GM12878 (cell line): ENCODE measurements at regions of chr3 and their contacts with region 1.

Region 1: GRCh38 chr3:133040696-133041523 is 2.7 kb downstream of the TMEM108 start:
- DNase-seq: peak; percentile 21
- ATAC-seq: peak; percentile 96
- H3K4me3 ChIP-seq: no peak overlapping the region
- H3K27ac ChIP-seq: no peak overlapping the region
- H3K4me1 ChIP-seq: no peaks in the 10 kb centered on the region
- H3K27me3 ChIP-seq: peaks cover 7 to 14% of the 10 kb centered on the region in 2 experiments
- CTCF ChIP-seq: peak; percentile 68 to 73 (median 70)
- EP300 ChIP-seq: no peak
- POLR2A ChIP-seq: no peak
- RAD21 ChIP-seq: peak; percentile 91

Region 2: GRCh38 chr3:133211449-133211848 is 170.5 kb after region 1 on chr3:
- CTCF ChIA-PET with region 1: interaction called, 9 read pairs
- POLR2A ChIA-PET with region 1: no interaction called
- RAD21 ChIA-PET with region 1: no interaction called
- SMC1A ChIA-PET with region 1: interaction called, 12 read pairs
- in situ Hi-C with region 1: no loop called
- intact Hi-C with region 1: no loop called
- DNase-seq: peak; percentile 78
- ATAC-seq: peak; percentile 99
- H3K4me3 ChIP-seq: no peak overlapping the region
- H3K27ac ChIP-seq: no peak overlapping the region; the same call in 1 of the 2 replicates
- H3K4me1 ChIP-seq: peaks cover 29% of the 10 kb centered on the region
- H3K27me3 ChIP-seq: no peaks in the 10 kb centered on the region
- CTCF ChIP-seq: no peak
- EP300 ChIP-seq: peak; percentile 17 to 61; a peak in 1 of 4 replicates
- POLR2A ChIP-seq: no peak
- RAD21 ChIP-seq: no peak

Region 3: DNA sequence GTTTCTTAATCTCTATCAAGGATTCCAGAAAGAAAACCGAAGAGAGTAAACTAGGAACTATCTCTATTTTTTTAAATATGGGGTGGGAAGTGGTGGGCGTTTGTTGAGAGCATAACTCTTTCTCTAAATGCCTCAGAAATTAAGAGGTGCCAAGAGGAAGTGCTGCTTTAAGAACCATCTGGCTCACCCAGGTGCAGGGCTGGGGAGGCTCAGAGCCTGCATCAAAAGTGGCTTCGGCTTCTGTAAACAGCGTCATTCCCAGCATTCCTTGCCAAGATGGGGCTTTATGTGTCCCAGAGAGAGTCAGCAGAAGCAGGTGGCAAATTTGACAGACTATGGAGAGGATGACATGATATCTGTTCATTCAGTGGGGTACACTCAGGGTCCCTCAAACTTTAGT is 235.7 kb after region 1 on chr3:
- CTCF ChIA-PET with region 1: interaction called, 3 read pairs
- POLR2A ChIA-PET with region 1: no interaction called
- RAD21 ChIA-PET with region 1: no interaction called
- SMC1A ChIA-PET with region 1: no interaction called
- in situ Hi-C with region 1: no loop called
- intact Hi-C with region 1: loop called (anchors 5 kb)
- DNase-seq: no peak
- ATAC-seq: peak; percentile 53
- H3K4me3 ChIP-seq: no peak overlapping the region
- H3K27ac ChIP-seq: no peak overlapping the region
- H3K4me1 ChIP-seq: no peaks in the 10 kb centered on the region
- H3K27me3 ChIP-seq: no peaks in the 10 kb centered on the region
- CTCF ChIP-seq: no peak
- EP300 ChIP-seq: no peak
- POLR2A ChIP-seq: no peak
- RAD21 ChIP-seq: no peak

Region 4: DNA sequence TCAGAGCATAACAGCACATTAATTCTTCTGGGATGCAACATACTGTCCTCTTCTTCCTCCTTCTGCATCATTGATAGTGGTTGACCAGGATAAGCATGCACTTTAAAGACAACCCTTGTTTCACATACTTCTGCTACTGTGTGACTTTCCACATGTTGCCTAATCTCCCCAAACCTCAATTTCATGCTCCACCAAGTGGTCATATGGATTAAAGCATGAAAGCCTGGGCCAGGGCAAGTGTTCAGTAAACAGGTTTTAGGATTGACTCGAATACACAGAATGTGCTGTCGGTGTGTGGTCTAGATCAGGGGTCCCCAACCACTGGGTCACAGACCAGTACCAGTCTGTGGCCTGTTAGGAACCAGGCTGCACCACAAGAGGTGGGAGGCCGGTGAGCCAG is 336.5 kb after region 1 on chr3:
- CTCF ChIA-PET with region 1: interaction called, 43 read pairs
- POLR2A ChIA-PET with region 1: no interaction called
- RAD21 ChIA-PET with region 1: interaction called, 23 read pairs
- SMC1A ChIA-PET with region 1: interaction called, 29 read pairs
- in situ Hi-C with region 1: no loop called
- intact Hi-C with region 1: loop called (anchors 1 kb)
- DNase-seq: no peak
- ATAC-seq: peak; percentile 75
- H3K4me3 ChIP-seq: no peak overlapping the region
- H3K27ac ChIP-seq: no peak overlapping the region
- H3K4me1 ChIP-seq: no peaks in the 10 kb centered on the region
- H3K27me3 ChIP-seq: no peaks in the 10 kb centered on the region; a peak in 1 of 4 replicates
- CTCF ChIP-seq: peak; percentile 30 to 49 (median 48); a peak in 5 of 6 replicates
- EP300 ChIP-seq: no peak
- POLR2A ChIP-seq: no peak
- RAD21 ChIP-seq: peak; percentile 70

Region 5: DNA sequence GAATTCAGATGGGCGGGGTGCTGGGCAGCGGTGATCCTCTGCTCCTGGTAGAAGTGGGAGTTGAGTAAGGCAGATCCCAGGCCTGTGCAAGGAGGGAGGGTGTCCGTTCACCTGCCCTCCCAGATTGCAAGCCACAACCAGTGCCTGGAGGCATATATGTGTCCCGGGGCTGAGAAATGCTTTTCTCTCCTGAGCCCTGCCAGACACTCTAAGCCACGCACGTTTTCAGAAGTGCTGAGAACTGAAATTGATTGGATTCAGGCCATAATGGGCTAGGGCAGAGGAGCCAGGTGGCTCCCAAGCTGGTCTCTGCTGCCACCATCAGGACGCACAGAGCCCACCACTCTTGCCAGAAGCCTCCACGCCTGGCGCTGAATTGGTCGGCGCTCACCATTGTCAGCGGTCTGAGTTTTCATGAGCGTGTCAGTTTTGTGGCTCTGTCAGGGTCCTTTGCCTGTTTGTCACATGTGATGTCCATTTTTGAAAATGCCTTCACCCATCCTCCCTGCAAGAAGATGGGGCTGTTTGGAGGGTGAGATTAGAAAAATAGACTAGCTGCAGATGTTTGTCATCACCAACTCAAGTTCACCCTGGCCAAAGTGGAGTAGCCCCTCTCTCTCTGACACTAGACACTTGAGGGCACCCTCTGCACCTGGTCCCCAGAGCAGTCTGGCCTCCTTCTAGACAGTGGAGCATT is 343.6 kb after region 1 on chr3:
- CTCF ChIA-PET with region 1: interaction called, 43 read pairs
- POLR2A ChIA-PET with region 1: no interaction called
- RAD21 ChIA-PET with region 1: interaction called, 23 read pairs
- SMC1A ChIA-PET with region 1: interaction called, 29 read pairs
- in situ Hi-C with region 1: loop called (anchors 5 kb)
- intact Hi-C with region 1: loop called (anchors 1 kb)
- DNase-seq: no peak
- ATAC-seq: peak; percentile 97
- H3K4me3 ChIP-seq: no peak overlapping the region
- H3K27ac ChIP-seq: no peak overlapping the region
- H3K4me1 ChIP-seq: no peaks in the 10 kb centered on the region
- H3K27me3 ChIP-seq: no peaks in the 10 kb centered on the region; a peak in 2 of 4 replicates
- CTCF ChIP-seq: peak; percentile 83 to 93 (median 91)
- EP300 ChIP-seq: no peak
- POLR2A ChIP-seq: no peak
- RAD21 ChIP-seq: peak; percentile 75

Region 6: GRCh38 chr3:133426721-133427120 is 385.8 kb after region 1 on chr3:
- CTCF ChIA-PET with region 1: interaction called, 17 read pairs
- POLR2A ChIA-PET with region 1: no interaction called
- RAD21 ChIA-PET with region 1: interaction called, 8 read pairs
- SMC1A ChIA-PET with region 1: interaction called, 13 read pairs
- in situ Hi-C with region 1: no loop called
- intact Hi-C with region 1: loop called (anchors 1 kb)
- DNase-seq: no peak
- ATAC-seq: no peak
- H3K4me3 ChIP-seq: no peak overlapping the region
- H3K27ac ChIP-seq: no peak overlapping the region
- H3K4me1 ChIP-seq: peaks cover 5% of the 10 kb centered on the region; the same call in 1 of the 2 replicates
- H3K27me3 ChIP-seq: peaks cover 0 to 4% of the 10 kb centered on the region in 2 experiments; a peak in 1 of 4 replicates
- CTCF ChIP-seq: no peak
- EP300 ChIP-seq: no peak
- POLR2A ChIP-seq: no peak
- RAD21 ChIP-seq: no peak